Naive thymus-derived CD4-positive, alpha-beta T cell (primary cell): ENCODE measurements at regions of chr1 and their contacts with region 1.

Region 1: GRCh38 chr1:172515927-172516326 is 17.0 kb upstream of the SUCO start:
- DNase-seq: no peak
- ATAC-seq: peak; percentile 57
- H3K4me3 ChIP-seq: no peak overlapping the region
- H3K4me3 Mint-ChIP-seq: no peak overlapping the region
- H3K27ac ChIP-seq: no peak overlapping the region
- H3K27ac Mint-ChIP-seq: no peak overlapping the region
- H3K4me1 ChIP-seq: no peaks in the 10 kb centered on the region
- H3K4me1 Mint-ChIP-seq: peaks cover 0 to 6% (median 0%) of the 10 kb centered on the region in 7 donors
- H3K27me3 ChIP-seq: no peaks in the 10 kb centered on the region
- H3K27me3 Mint-ChIP-seq: peaks cover 0 to 20% (median 0%) of the 10 kb centered on the region in 5 donors

Region 2: DNA sequence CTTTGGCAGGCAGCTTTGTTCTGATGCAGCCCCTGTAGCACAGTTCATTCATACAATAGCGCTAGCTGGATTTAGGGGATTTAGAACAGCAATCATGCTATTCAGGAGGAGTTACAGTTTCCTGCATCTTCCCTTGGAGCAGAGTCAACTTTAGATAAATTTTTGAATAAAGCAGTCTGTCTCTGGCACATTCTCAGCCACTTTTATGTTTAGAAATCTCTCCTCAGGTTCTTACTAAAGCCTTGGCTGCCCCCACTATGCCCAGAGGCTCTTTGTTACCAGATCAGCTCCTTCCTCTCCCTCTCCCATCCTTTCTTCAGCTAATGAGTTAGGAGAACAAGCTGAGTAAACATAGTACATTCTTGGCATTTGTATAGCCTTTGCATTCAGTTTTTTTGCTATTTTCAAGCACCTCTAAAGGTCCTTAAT is 55.0 kb before region 1 on chr1:
- CTCF ChIA-PET with region 1: no interaction called
- POLR2A ChIA-PET with region 1: no interaction called
- intact Hi-C with region 1: no loop called
- DNase-seq: no peak
- ATAC-seq: no peak
- H3K4me3 ChIP-seq: no peak overlapping the region
- H3K4me3 Mint-ChIP-seq: no peak overlapping the region
- H3K27ac ChIP-seq: no peak overlapping the region
- H3K27ac Mint-ChIP-seq: peak overlapping the region in 1 of 9 donors; percentile 43
- H3K4me1 ChIP-seq: no peaks in the 10 kb centered on the region
- H3K4me1 Mint-ChIP-seq: no peaks in the 10 kb centered on the region
- H3K27me3 ChIP-seq: no peaks in the 10 kb centered on the region
- H3K27me3 Mint-ChIP-seq: peaks cover 5 to 38% (median 5%) of the 10 kb centered on the region in 5 donors

Region 3: GRCh38 chr1:172487550-172487949 is 28.4 kb before region 1 on chr1:
- CTCF ChIA-PET with region 1: no interaction called
- POLR2A ChIA-PET with region 1: interaction called, 3 read pairs
- intact Hi-C with region 1: loop called in 1 of 2 experiments (anchors 5 kb)
- DNase-seq: peak in 1 of 9 donors; percentile 12
- ATAC-seq: no peak
- H3K4me3 ChIP-seq: no peak overlapping the region
- H3K4me3 Mint-ChIP-seq: peak overlapping the region in 5 of 10 donors; percentile 8 to 59 (median 41)
- H3K27ac ChIP-seq: no peak overlapping the region
- H3K27ac Mint-ChIP-seq: no peak overlapping the region
- H3K4me1 ChIP-seq: peaks cover 0 to 12% of the 10 kb centered on the region in 2 donors
- H3K4me1 Mint-ChIP-seq: peaks cover 9 to 26% (median 19%) of the 10 kb centered on the region in 7 donors
- H3K27me3 ChIP-seq: no peaks in the 10 kb centered on the region
- H3K27me3 Mint-ChIP-seq: peaks cover 4 to 35% (median 9%) of the 10 kb centered on the region in 5 donors